AG04450 (cell line): ENCODE measurements at regions of chr7 and their contacts with region 1.

Region 1: GRCh38 chr7:27662490-27663205 is at the start of gene HIBADH:
- DNase-seq: peak; percentile 98
- H3K4me3 ChIP-seq: peak within 1 kb of the TSS; percentile 85
- H3K27ac ChIP-seq: peak within 1 kb of the TSS; percentile 85
- H3K27me3 ChIP-seq: no peaks in the 10 kb centered on the region
- CTCF ChIP-seq: peak; percentile 16; the same call in 1 of the 2 replicates
- polyA plus RNA-seq, gene HIBADH: 74.1 and 86.3 TPM in 2 replicates

Region 2: GRCh38 chr7:26237035-26237807 is 1425.4 kb before region 1 on chr7:
- CTCF ChIA-PET with region 1: no interaction called
- POLR2A ChIA-PET with region 1: no interaction called
- DNase-seq: no peak
- H3K4me3 ChIP-seq: no peak overlapping the region
- H3K27ac ChIP-seq: no peak overlapping the region
- H3K27me3 ChIP-seq: no peaks in the 10 kb centered on the region
- CTCF ChIP-seq: no peak

Region 3: GRCh38 chr7:27640914-27641580 is 21.6 kb before region 1 on chr7:
- CTCF ChIA-PET with region 1: no interaction called
- POLR2A ChIA-PET with region 1: interaction called, 10 read pairs
- DNase-seq: no peak
- H3K4me3 ChIP-seq: no peak overlapping the region
- H3K27ac ChIP-seq: no peak overlapping the region
- H3K27me3 ChIP-seq: no peaks in the 10 kb centered on the region
- CTCF ChIP-seq: no peak

Region 4: GRCh38 chr7:27677912-27678612 is 15.4 kb after region 1 on chr7:
- CTCF ChIA-PET with region 1: no interaction called
- POLR2A ChIA-PET with region 1: interaction called, 10 read pairs
- DNase-seq: peak; percentile 80
- H3K4me3 ChIP-seq: no peak overlapping the region
- H3K27ac ChIP-seq: peak overlapping the region; percentile 92
- H3K27me3 ChIP-seq: no peaks in the 10 kb centered on the region
- CTCF ChIP-seq: no peak

Region 5: DNA sequence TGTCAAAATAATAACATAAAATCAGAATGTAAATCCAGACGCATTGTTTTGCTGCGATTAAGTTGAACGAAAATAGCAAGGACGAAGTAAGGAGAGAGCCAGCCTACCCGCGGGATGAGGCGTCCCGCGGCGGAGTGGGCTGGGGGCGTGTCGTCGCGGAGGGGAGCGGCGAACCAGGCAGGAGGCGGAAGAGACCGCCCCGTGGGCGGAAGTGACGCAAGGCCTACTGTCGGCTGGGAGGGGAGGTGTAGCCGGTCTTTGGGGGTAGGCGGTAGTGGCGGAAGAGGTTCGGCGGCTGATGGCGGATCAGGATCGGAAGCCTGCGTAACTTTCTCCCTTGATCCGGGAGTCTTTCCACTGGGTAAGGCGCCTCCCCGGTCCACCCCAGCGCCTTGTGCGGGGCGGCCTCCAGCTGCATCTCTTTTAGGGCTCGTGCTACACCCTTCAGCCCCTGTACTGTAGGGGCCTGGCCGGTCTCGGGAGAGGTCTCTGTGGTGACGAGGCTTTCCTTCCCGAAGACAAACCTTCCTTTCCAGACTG is 77.3 kb after region 1 on chr7 and contains the start of gene TAX1BP1:
- CTCF ChIA-PET with region 1: no interaction called
- POLR2A ChIA-PET with region 1: interaction called, 19 read pairs
- DNase-seq: peak; percentile 80
- H3K4me3 ChIP-seq: peak within 1 kb of the TSS; percentile 98
- H3K27ac ChIP-seq: peak within 1 kb of the TSS; percentile 97
- H3K27me3 ChIP-seq: no peaks in the 10 kb centered on the region
- CTCF ChIP-seq: no peak
- polyA plus RNA-seq, gene TAX1BP1: 91.1 and 116 TPM in 2 replicates